Calu3 (cell line): ENCODE measurements at regions of chr17 and their contacts with region 1.

Region 1: GRCh38 chr17:43467981-43468581 is 15.7 kb upstream of the DHX8 start:
- DNase-seq: no peak
- H3K4me3 Mint-ChIP-seq: no peak overlapping the region
- H3K27ac Mint-ChIP-seq: no peak overlapping the region
- H3K4me1 Mint-ChIP-seq: peaks cover 22% of the 10 kb centered on the region
- H3K27me3 Mint-ChIP-seq: no peaks in the 10 kb centered on the region
- CTCF ChIP-seq: no peak

Region 2: GRCh38 chr17:43360739-43361505 is 107.2 kb before region 1 on chr17:
- CTCF ChIA-PET with region 1: no interaction called
- intact Hi-C with region 1: no loop called
- DNase-seq: peak; percentile 95
- H3K4me3 Mint-ChIP-seq: peak overlapping the region; percentile 72
- H3K27ac Mint-ChIP-seq: peak overlapping the region; percentile 100
- H3K4me1 Mint-ChIP-seq: peaks cover 42% of the 10 kb centered on the region
- H3K27me3 Mint-ChIP-seq: peaks cover 13% of the 10 kb centered on the region
- CTCF ChIP-seq: no peak

Region 3: GRCh38 chr17:43423777-43424455 is 44.2 kb before region 1 on chr17:
- CTCF ChIA-PET with region 1: no interaction called
- intact Hi-C with region 1: loop called (anchors 5 kb)
- DNase-seq: no peak
- H3K4me3 Mint-ChIP-seq: no peak overlapping the region
- H3K27ac Mint-ChIP-seq: no peak overlapping the region
- H3K4me1 Mint-ChIP-seq: no peaks in the 10 kb centered on the region
- H3K27me3 Mint-ChIP-seq: no peaks in the 10 kb centered on the region
- CTCF ChIP-seq: no peak

Region 4: DNA sequence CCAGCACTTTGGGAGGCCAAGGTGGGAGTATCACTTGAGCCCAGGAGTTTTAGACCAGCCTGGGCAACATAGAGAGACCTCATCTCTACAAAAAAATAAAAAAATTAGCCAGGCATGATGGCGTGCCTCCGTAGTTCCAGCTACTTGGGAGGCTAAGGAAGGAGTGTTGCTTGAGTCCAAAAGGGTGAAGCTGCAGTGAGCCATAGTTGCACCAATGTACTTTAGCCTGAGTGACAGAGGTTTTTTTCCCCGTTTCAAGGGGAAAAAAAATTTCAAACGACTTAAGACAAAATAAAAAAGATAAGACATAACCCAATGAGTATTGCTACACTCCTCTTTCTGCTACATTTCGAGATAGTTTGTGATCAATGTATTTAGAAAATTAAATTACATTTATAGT is 22.5 kb after region 1 on chr17:
- CTCF ChIA-PET with region 1: no interaction called
- intact Hi-C with region 1: no loop called
- DNase-seq: no peak
- H3K4me3 Mint-ChIP-seq: no peak overlapping the region
- H3K27ac Mint-ChIP-seq: no peak overlapping the region
- H3K4me1 Mint-ChIP-seq: peaks cover 2% of the 10 kb centered on the region
- H3K27me3 Mint-ChIP-seq: no peaks in the 10 kb centered on the region
- CTCF ChIP-seq: no peak